Breast epithelium (tissue), 4 donors: ENCODE measurements at regions of chr13 and their contacts with region 1.

Region 1: DNA sequence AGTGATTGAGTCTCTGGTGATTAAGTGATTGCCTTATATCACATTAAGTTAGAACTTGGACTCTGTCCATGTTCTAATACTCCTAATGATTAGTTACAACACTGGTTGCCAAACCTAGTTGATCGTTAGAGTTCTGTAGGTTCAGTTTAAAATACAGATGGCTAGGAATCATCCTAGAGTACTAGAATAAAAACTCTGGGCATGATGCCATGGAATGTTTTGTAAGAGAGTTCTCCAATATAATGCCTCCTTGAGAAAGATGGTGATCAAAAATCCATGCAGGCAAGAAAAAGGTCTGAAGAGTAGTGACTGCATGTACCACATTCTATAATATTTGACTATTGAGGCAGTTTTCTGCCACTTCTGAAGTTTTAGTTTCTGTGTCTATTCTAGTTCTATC is 176.3 kb downstream of the GPC5 start:
- DNase-seq: no peak
- H3K4me3 ChIP-seq: no peak overlapping the region
- H3K27ac ChIP-seq: no peak overlapping the region
- H3K4me1 ChIP-seq: no peaks in the 10 kb centered on the region
- H3K27me3 ChIP-seq: no peaks in the 10 kb centered on the region
- CTCF ChIP-seq: no peak
- POLR2A ChIP-seq: no peak

Region 2: GRCh38 chr13:90910018-90910639 is 664.6 kb before region 1 on chr13:
- intact Hi-C with region 1: no loop called
- DNase-seq: no peak
- H3K4me3 ChIP-seq: no peak overlapping the region
- H3K27ac ChIP-seq: no peak overlapping the region
- H3K4me1 ChIP-seq: no peaks in the 10 kb centered on the region
- H3K27me3 ChIP-seq: no peaks in the 10 kb centered on the region
- CTCF ChIP-seq: no peak
- POLR2A ChIP-seq: no peak

Region 3: GRCh38 chr13:91369441-91369831 is 205.3 kb before region 1 on chr13:
- intact Hi-C with region 1: no loop called
- DNase-seq: no peak
- H3K4me3 ChIP-seq: no peak overlapping the region
- H3K27ac ChIP-seq: no peak overlapping the region
- H3K4me1 ChIP-seq: no peaks in the 10 kb centered on the region
- H3K27me3 ChIP-seq: no peaks in the 10 kb centered on the region
- CTCF ChIP-seq: no peak
- POLR2A ChIP-seq: no peak

Region 4: GRCh38 chr13:91491984-91492383 is 82.8 kb before region 1 on chr13:
- intact Hi-C with region 1: loop called (anchors 5 kb)
- DNase-seq: no peak
- H3K4me3 ChIP-seq: no peak overlapping the region
- H3K27ac ChIP-seq: no peak overlapping the region
- H3K4me1 ChIP-seq: no peaks in the 10 kb centered on the region
- H3K27me3 ChIP-seq: no peaks in the 10 kb centered on the region
- CTCF ChIP-seq: no peak
- POLR2A ChIP-seq: no peak

Region 5: DNA sequence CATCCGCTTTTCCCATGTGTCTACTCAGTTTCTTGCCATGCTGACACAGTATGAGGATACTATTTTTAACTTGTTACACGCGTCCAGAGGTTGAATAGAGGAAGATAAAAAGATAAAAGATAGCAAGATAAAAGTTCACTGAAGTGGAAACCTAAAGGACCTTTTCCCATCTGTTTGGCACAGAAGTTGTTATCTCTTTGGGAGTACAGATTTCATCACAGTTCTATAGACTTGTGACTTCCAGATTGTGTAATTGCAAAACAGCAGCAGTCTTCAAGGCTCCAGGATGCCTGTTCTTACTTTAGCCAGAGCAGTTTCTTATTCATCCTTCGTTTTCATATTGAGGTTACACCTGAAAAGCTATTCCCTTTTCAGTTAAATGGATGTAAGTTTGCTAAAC is 192.9 kb after region 1 on chr13:
- intact Hi-C with region 1: no loop called
- DNase-seq: no peak
- H3K4me3 ChIP-seq: no peak overlapping the region
- H3K27ac ChIP-seq: no peak overlapping the region
- H3K4me1 ChIP-seq: no peaks in the 10 kb centered on the region
- H3K27me3 ChIP-seq: no peaks in the 10 kb centered on the region
- CTCF ChIP-seq: no peak
- POLR2A ChIP-seq: no peak